Sigmoid colon (tissue), 7 donors: ENCODE measurements at regions of chr12 and their contacts with region 1.

Region 1: DNA sequence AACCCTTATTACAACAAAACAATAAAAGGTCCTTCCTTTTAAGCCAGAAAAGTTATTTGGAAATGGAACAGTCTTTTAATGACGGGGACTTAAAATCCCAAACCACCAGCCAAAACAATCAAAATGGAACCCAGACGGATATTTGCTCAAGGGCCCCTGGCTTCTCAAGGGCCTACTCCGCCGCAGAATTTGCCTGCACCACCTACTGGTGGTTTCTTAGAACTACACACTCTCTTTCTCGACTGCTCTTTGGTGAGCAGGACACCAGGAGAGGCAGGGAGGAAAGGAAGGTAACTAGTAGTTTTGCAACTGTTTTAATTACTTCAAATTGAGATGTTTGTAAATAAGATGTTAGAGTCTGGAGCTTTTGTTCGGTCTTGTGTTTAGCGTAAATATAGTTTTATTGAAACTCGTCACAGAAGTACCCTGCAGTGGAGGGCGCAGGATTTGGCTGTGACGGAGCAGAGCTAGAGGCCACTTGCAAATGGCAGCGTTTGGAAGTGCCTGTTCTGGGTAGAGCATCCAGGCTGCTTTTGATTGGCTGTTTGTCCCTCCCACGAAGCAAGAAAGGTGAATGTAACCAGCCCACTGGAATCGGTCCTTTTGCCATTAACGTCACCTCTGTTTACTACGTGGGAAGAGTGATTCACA is 238.5 kb downstream of the CACNA1C start:
- DNase-seq: peak; percentile 60
- H3K4me3 ChIP-seq: no peak overlapping the region
- H3K27ac ChIP-seq: peak overlapping the region in 3 of 4 donors; percentile 77 to 89 (median 87)
- H3K4me1 ChIP-seq: peaks cover 0 to 96% (median 84%) of the 10 kb centered on the region in 4 donors
- H3K27me3 ChIP-seq: no peaks in the 10 kb centered on the region
- CTCF ChIP-seq: peak; percentile 12 to 70 (median 46)
- EP300 ChIP-seq: no peak
- POLR2A ChIP-seq: no peak

Region 2: DNA sequence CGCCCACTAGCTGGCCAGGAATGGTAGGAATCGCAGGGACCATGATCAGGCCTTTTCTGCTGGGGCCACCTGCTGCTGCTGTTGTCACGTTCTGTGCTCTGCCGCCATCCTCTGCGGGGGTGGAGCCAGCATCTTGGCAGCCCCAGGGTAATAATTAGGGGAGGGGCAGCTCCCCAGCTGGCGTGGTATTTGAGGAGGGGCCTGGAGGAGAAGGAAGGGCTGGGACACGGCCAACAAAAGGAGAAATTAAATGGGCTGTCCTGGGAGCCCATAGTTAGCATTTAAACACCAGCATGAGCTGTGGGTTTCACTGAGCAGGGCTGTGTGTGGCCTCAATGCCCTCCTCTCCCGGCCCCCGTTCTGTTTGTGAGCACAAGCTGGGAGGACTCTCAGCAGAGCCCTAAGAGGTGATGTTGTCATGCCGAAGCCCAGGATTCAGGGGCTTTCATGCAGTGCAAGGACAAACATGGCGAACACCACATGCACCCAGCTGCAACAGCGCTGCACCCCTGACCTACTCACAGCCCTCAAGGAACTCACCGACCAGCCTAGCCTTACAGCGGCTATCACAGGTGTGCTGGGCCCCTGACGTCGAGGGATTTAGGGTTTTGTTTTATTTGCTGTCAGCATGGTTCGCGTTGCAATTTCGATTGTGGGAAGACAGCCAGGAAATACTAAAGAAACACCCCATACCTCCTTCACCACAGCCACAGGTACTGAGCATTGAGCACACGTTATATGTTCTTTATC is 85.8 kb after region 1 on chr12:
- intact Hi-C with region 1: loop called (anchors 5 kb)
- DNase-seq: peak; percentile 48
- H3K4me3 ChIP-seq: no peak overlapping the region
- H3K27ac ChIP-seq: peak overlapping the region in 3 of 4 donors; percentile 71 to 90 (median 84)
- H3K4me1 ChIP-seq: peaks cover 0 to 97% (median 75%) of the 10 kb centered on the region in 4 donors
- H3K27me3 ChIP-seq: no peaks in the 10 kb centered on the region
- CTCF ChIP-seq: no peak
- EP300 ChIP-seq: no peak
- POLR2A ChIP-seq: no peak

Region 3: DNA sequence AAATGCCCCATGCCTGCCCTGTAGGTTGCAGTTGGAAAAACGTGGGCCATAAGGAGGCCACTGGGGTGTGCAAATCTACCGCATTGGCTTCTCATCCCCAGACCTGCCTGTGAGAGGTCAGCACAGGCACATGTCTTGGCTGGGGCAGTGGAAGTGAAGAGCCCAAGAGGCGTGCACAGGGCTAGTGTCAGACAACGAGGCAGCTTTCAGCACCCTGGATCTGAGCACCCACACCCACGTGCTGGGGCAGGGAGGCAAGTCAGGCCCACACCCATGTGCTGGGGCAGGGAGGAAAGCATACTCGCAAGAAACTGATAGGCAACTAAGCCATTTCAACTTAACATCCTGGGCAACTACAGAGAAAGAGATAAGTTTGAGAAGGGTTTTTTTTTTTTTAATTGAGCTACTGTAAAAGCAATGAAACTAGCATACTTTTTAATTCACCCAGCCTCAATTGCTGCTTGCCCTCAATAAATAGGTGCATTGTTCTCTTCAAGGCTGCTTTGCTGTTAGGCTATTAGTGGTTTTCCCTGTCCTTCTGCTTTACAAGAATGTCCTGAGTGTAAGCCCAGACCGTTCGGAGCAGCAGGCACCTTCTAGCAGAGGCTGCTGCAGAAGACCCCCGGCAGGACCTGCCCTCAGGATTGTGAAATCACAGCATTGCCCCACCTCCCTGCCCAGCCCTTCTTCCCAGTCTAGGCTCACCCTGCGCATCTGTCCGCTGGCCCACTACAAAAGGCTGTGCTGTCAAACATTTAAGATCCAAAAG is 148.2 kb after region 1 on chr12:
- intact Hi-C with region 1: no loop called
- DNase-seq: no peak
- H3K4me3 ChIP-seq: no peak overlapping the region
- H3K27ac ChIP-seq: peak overlapping the region in 3 of 4 donors; percentile 38 to 54 (median 53)
- H3K4me1 ChIP-seq: peaks cover 0 to 63% (median 52%) of the 10 kb centered on the region in 4 donors
- H3K27me3 ChIP-seq: no peaks in the 10 kb centered on the region
- CTCF ChIP-seq: no peak
- EP300 ChIP-seq: no peak
- POLR2A ChIP-seq: no peak